Naive thymus-derived CD4-positive, alpha-beta T cell (primary cell): ENCODE measurements at regions of chr11 and their contacts with region 1.

Region 1: DNA sequence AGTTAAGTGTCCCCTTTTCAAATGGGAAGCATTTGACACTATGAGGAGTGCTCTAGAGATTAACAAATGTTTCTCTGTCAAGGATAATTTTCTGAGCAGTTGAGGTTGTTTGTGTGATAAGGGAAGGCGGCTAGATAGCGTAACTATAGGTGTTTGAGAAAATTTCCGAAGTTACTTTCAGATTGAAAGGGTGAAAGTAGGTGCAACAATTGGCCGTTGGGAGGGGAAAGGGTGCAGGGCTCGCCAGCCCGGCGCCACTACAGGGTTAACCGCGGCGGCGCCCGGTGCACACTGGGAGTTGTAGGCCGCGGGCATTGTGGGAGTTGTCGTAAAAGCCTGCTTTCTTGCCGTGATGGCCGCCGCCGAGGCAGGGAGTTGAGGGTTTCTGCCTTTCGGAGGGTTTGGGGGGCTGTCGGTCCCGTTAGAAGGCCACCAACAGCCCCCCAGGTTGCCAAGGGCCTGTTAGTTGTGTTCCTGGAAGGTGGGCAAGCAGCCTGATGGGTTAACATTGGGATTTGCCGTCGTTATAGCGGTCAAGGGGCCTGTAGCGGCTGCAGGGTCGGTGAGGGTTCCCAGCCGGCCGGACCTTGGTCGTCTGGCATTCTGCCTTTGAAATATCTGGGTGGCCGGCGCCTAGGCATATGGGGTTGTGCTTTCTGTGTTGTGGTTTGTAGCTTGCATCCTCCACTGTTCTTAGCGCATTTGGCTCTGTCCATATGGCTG is 36.5 kb upstream of the HSD17B12 start:
- DNase-seq: peak; percentile 70 to 89 (median 86)
- ATAC-seq: peak; percentile 100
- H3K4me3 ChIP-seq: peak overlapping the region; percentile 95
- H3K4me3 Mint-ChIP-seq: peak overlapping the region; percentile 87 to 98 (median 94)
- H3K27ac ChIP-seq: peak overlapping the region; percentile 85
- H3K27ac Mint-ChIP-seq: peak overlapping the region; percentile 51 to 95 (median 90)
- H3K4me1 ChIP-seq: peaks cover 7 to 10% of the 10 kb centered on the region in 2 donors
- H3K4me1 Mint-ChIP-seq: peaks cover 7 to 31% (median 23%) of the 10 kb centered on the region in 7 donors
- H3K27me3 ChIP-seq: no peaks in the 10 kb centered on the region
- H3K27me3 Mint-ChIP-seq: peaks cover 12 to 18% (median 17%) of the 10 kb centered on the region in 5 donors

Region 2: DNA sequence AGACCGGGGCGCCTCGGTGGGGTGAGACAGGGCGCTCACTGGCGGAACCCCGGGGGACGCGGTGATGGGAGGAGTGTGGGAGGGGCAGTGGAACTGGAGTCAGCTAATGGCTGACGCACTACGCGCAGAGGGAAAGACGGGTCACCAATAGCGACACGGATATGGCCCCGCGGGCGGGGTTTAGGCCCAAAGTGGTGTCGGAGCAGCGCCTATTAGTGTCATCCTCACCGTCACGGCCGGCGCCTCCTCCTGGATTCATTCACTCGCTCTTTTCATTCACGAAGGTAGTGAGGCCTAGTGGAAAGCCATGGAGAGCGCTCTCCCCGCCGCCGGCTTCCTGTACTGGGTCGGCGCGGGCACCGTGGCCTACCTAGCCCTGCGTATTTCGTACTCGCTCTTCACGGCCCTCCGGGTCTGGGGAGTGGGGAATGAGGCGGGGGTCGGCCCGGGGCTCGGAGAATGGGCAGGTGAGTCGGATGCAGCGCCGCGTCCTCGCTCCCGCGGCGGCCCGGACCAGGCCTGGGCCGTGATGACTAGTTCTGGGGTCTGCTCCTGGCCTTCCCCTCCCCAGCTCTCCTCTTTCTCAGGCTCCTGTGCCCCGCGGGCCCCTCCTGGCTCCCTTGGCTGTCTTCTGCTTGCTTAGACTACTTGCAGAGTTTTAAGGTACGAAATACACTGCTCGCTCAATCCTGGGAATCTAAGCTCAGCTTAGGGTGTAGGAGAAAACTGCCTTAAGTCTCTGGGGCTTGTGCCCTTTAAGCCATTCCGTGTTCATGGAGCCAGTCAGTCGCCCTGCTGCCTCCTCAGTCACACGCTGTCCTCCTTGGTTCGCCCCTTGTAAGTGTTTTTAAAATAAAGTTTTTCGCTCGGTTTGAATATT is 36.7 kb after region 1 on chr11 and contains the start of gene HSD17B12:
- CTCF ChIA-PET with region 1: no interaction called
- POLR2A ChIA-PET with region 1: interaction called, 9 read pairs
- intact Hi-C with region 1: loop called (anchors 1 kb)
- DNase-seq: peak; percentile 91 to 100 (median 99)
- ATAC-seq: peak; percentile 99
- H3K4me3 ChIP-seq: peak within 1 kb of the TSS; percentile 81
- H3K4me3 Mint-ChIP-seq: peak within 1 kb of the TSS; percentile 85 to 99 (median 96)
- H3K27ac ChIP-seq: peak within 1 kb of the TSS; percentile 89
- H3K27ac Mint-ChIP-seq: peak within 1 kb of the TSS; percentile 84 to 98 (median 97)
- H3K4me1 ChIP-seq: peaks cover 4 to 8% of the 10 kb centered on the region in 2 donors
- H3K4me1 Mint-ChIP-seq: peaks cover 11 to 59% (median 43%) of the 10 kb centered on the region in 7 donors
- H3K27me3 ChIP-seq: no peaks in the 10 kb centered on the region
- H3K27me3 Mint-ChIP-seq: peaks cover 0 to 14% (median 2%) of the 10 kb centered on the region in 5 donors
- total RNA-seq, gene HSD17B12: 21.1 to 39.5 (median 24.7) TPM

Region 3: DNA sequence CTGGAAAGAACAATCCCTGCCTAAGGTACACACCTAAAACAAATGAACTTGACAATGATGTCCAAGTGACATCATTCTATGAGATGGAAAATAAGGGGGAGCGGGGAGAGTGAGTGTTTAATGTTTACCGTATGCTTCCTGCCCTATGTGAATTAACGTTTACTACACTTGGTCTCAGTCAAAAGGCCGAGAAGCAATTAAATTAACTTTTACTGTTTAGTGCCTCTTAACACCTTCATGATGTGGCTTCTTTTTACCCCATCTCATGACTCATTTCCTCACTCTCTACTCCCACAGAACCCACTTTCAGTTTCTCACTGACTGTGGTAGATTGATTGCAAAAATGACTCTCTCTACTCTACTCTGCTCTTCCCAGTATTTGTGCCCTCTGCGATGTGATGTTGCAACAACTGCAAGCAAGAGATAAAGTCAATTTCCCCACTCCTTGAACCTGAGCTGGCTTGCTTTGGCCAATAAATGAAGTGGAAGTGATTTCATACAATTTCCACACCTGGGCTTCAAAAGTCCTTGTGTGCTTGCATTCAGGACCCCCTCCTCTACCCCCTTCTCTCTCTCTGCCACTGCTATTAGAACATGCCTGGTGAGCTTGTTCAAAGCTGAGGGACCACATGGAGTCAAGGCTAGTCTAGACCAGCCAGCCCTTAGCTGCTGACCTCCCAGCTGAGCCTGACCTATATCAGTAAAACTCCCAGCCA is 225.0 kb after region 1 on chr11:
- CTCF ChIA-PET with region 1: no interaction called
- POLR2A ChIA-PET with region 1: no interaction called
- intact Hi-C with region 1: loop called in 1 of 2 experiments (anchors 1 kb)
- DNase-seq: peak in 4 of 9 donors; percentile 8 to 58 (median 12)
- ATAC-seq: peak; percentile 99
- H3K4me3 ChIP-seq: peak overlapping the region; percentile 12
- H3K4me3 Mint-ChIP-seq: peak overlapping the region; percentile 2 to 65 (median 58)
- H3K27ac ChIP-seq: no peak overlapping the region
- H3K27ac Mint-ChIP-seq: peak overlapping the region in 5 of 9 donors; percentile 28 to 82 (median 62)
- H3K4me1 ChIP-seq: peaks cover 8 to 17% of the 10 kb centered on the region in 2 donors
- H3K4me1 Mint-ChIP-seq: peaks cover 8 to 27% (median 11%) of the 10 kb centered on the region in 7 donors
- H3K27me3 ChIP-seq: no peaks in the 10 kb centered on the region
- H3K27me3 Mint-ChIP-seq: peaks cover 21 to 68% (median 24%) of the 10 kb centered on the region in 5 donors